Ascending aorta (tissue), 2 donors: ENCODE measurements at regions of chr2 and their contacts with region 1.

Region 1: DNA sequence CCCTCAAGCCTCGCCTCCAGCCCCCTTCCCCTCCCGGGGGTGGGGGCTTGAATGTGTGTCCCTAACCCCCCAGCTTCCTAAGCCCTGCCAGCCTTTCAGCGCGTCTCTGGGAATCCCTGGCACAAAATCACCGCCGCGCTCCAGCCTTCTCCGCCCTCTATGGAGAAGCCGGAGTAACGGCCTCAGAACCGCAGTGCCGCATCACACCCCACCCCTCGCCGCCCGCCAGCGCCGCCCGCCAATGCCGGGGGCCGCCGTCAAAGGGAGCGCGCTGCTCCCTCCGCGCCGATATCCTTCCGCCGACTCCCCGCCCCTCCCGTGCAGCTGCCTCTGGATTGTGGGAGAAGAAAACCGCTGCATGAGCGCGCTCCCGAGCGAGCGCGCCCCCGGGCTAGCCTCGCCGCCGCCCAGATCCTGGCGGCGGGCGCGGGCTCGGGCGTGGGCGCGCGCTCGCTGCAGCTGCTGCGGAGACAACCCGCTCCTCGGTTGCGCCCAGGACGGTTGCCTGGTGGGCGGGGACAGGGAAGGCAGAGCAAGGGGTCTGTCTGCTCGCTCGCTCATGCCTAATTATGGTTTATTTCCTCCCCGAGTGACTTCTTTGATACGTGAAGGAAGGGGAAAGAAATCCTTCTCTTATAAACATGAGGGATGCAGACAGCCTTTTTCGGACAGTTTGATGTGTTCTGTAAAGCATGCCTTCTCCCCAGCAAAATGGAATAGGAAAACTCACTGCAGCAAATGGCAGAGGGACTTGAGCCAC is at the start of gene CCDC88A:
- DNase-seq: peak; percentile 84 to 97
- H3K4me3 ChIP-seq: peak within 1 kb of the TSS; percentile 83 to 92
- H3K27ac ChIP-seq: peak within 1 kb of the TSS; percentile 85 to 92
- H3K4me1 ChIP-seq: peaks cover 0 to 8% of the 10 kb centered on the region in 2 donors
- H3K27me3 ChIP-seq: no peaks in the 10 kb centered on the region
- CTCF ChIP-seq: peak; percentile 28 to 39 (median 29)
- total RNA-seq, gene CCDC88A: 39.2 TPM

Region 2: DNA sequence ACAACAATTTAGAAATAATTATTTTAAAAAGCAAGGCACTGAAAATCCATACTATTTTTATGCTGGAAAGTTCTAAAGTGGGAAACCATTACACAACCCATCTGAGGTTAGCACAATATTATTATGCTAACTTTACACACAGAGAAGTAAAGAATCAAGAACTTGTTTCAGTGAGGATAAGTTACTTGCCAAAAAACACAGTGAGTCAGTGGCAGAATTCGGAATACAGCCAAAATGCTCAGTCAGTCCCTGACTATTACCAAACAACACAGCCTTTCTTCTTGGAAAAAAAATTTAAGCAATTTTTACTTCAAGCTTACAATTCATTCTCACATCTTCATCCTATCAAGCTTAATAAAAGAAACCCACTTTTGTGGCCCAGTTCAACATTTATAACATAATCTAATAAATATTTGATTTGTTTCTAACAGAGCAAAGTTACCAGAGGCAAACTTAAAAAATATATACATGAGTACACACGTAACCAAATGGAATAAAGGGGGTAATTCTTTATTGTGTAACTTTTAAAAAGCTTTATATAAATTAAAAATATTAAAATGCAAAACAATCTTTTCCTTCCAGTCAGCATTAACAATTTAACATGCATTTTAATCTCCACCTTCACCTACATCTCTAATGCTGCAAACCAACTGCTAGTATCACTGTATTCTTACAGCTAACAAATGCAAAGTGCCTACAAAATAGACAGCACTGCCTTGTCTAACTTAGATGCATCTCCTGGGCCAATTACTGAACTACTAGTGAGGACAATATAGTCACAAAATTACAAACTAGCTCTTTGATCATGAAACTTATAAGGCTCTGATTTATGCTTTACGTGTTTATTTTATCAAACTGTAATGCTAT is 55.4 kb before region 1 on chr2:
- intact Hi-C with region 1: loop called (anchors 1 kb)
- DNase-seq: peak in 1 of 2 donors; percentile 85
- H3K4me3 ChIP-seq: no peak overlapping the region
- H3K27ac ChIP-seq: peak overlapping the region; percentile 10 to 54
- H3K4me1 ChIP-seq: peaks cover 0 to 17% of the 10 kb centered on the region in 2 donors
- H3K27me3 ChIP-seq: no peaks in the 10 kb centered on the region
- CTCF ChIP-seq: no peak

Region 3: GRCh38 chr2:55519938-55520885 is 100.4 kb after region 1 on chr2:
- intact Hi-C with region 1: loop called (anchors 2 kb)
- DNase-seq: peak in 1 of 2 donors; percentile 68
- H3K4me3 ChIP-seq: peak overlapping the region; percentile 60 to 93
- H3K27ac ChIP-seq: peak overlapping the region; percentile 83 to 84
- H3K4me1 ChIP-seq: peaks cover 3% of the 10 kb centered on the region in 2 donors
- H3K27me3 ChIP-seq: no peaks in the 10 kb centered on the region
- CTCF ChIP-seq: no peak